Breast epithelium (tissue), 4 donors: ENCODE measurements at regions of chr12 and their contacts with region 1.

Region 1: GRCh38 chr12:54526812-54527630 is 22.4 kb upstream of the PDE1B start:
- DNase-seq: no peak
- H3K4me3 ChIP-seq: no peak overlapping the region
- H3K27ac ChIP-seq: no peak overlapping the region
- H3K4me1 ChIP-seq: no peaks in the 10 kb centered on the region
- H3K27me3 ChIP-seq: no peaks in the 10 kb centered on the region
- CTCF ChIP-seq: peak in 1 of 3 donors; percentile 25
- POLR2A ChIP-seq: no peak

Region 2: GRCh38 chr12:53854701-53855316 is 672.2 kb before region 1 on chr12:
- intact Hi-C with region 1: loop called (anchors 5 kb)
- DNase-seq: no peak
- H3K4me3 ChIP-seq: no peak overlapping the region
- H3K27ac ChIP-seq: no peak overlapping the region
- H3K4me1 ChIP-seq: no peaks in the 10 kb centered on the region
- H3K27me3 ChIP-seq: peaks cover 0 to 5% of the 10 kb centered on the region in 2 donors
- CTCF ChIP-seq: no peak
- POLR2A ChIP-seq: no peak

Region 3: DNA sequence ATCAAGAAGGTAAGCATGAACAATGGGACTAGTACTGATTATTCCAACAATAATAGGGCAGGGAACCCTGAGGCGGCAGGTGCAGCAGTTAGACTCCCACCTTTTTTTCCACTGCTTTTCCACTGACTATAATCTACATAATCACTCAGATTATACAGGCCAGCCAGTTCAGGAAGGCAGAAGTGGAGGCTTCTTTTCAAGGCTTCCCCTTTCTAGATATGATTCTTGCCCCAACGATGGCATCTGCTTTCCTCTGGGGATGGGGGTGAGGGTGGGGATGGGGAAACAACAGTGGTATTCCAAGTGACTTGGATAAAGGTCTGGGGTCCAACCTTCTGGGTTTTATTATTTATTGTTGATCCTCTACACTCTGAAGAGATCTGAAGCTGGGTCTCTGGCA is 29.1 kb before region 1 on chr12:
- intact Hi-C with region 1: no loop called
- DNase-seq: no peak
- H3K4me3 ChIP-seq: peak overlapping the region; percentile 10 to 41 (median 38)
- H3K27ac ChIP-seq: no peak overlapping the region
- H3K4me1 ChIP-seq: no peaks in the 10 kb centered on the region
- H3K27me3 ChIP-seq: no peaks in the 10 kb centered on the region
- CTCF ChIP-seq: no peak
- POLR2A ChIP-seq: no peak

Region 4: GRCh38 chr12:54795644-54796043 is 268.6 kb after region 1 on chr12:
- intact Hi-C with region 1: no loop called
- DNase-seq: no peak
- H3K4me3 ChIP-seq: no peak overlapping the region
- H3K27ac ChIP-seq: no peak overlapping the region
- H3K4me1 ChIP-seq: no peaks in the 10 kb centered on the region
- H3K27me3 ChIP-seq: no peaks in the 10 kb centered on the region
- CTCF ChIP-seq: no peak
- POLR2A ChIP-seq: no peak